AG04450 (cell line): ENCODE measurements at regions of chr9 and their contacts with region 1.

Region 1: GRCh38 chr9:17531642-17532254 is 47.1 kb upstream of the SH3GL2 start:
- DNase-seq: peak; percentile 13
- H3K4me3 ChIP-seq: peak overlapping the region; percentile 39
- H3K27ac ChIP-seq: no peak overlapping the region
- H3K27me3 ChIP-seq: peaks cover 5% of the 10 kb centered on the region
- CTCF ChIP-seq: peak; percentile 82

Region 2: GRCh38 chr9:17519761-17520160 is 12.0 kb before region 1 on chr9:
- CTCF ChIA-PET with region 1: interaction called, 18 read pairs
- POLR2A ChIA-PET with region 1: no interaction called
- DNase-seq: no peak
- H3K4me3 ChIP-seq: no peak overlapping the region
- H3K27ac ChIP-seq: no peak overlapping the region
- H3K27me3 ChIP-seq: no peaks in the 10 kb centered on the region
- CTCF ChIP-seq: no peak

Region 3: DNA sequence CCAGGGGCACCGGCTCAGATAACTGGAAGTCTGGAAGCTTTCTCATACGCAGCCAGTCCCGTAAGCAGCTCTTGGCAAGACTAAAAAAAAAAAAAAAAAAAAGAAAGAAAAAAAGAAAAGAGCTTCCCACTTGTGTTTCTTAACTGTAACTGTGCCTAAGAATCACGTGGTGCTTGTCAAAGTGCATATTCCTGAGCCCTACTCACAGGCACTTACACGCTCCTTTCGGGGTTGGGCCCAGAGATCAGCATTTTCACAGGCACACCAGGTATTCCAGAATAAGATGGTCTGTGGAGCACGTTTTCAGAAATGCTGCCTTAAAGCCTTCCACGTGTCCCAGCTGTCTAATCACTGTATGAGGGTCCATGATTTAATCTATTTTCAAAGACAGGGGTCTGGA is 24.5 kb after region 1 on chr9:
- CTCF ChIA-PET with region 1: no interaction called
- POLR2A ChIA-PET with region 1: no interaction called
- DNase-seq: no peak
- H3K4me3 ChIP-seq: no peak overlapping the region
- H3K27ac ChIP-seq: no peak overlapping the region
- H3K27me3 ChIP-seq: peaks cover 2% of the 10 kb centered on the region
- CTCF ChIP-seq: no peak

Region 4: GRCh38 chr9:17802249-17802857 is 270.6 kb after region 1 on chr9:
- CTCF ChIA-PET with region 1: interaction called, 81 read pairs
- POLR2A ChIA-PET with region 1: no interaction called
- DNase-seq: no peak
- H3K4me3 ChIP-seq: no peak overlapping the region
- H3K27ac ChIP-seq: no peak overlapping the region
- H3K27me3 ChIP-seq: no peaks in the 10 kb centered on the region
- CTCF ChIP-seq: peak; percentile 71

Region 5: DNA sequence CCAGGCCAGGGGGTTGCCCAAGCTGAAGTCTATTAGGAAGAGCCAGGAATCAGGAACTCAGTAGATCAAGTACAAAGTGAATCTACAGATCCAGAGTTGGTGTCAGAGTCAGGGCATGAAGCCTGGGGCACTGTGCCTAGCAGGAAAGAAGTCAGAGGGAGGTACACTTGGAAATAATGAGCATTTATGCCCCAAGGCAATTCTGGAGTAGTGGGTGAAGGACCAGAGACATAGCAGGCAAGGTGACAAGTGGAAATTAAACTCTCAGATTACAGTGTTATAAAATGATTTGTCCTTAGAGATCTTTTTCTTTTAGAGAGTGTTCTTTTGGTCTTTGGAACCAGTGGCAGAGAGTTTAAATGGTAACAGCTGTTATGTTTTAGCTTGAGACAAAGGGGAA is 1080.2 kb after region 1 on chr9:
- CTCF ChIA-PET with region 1: no interaction called
- POLR2A ChIA-PET with region 1: no interaction called
- DNase-seq: no peak
- H3K4me3 ChIP-seq: no peak overlapping the region
- H3K27ac ChIP-seq: no peak overlapping the region
- H3K27me3 ChIP-seq: no peaks in the 10 kb centered on the region
- CTCF ChIP-seq: no peak